ENCODE measurements at regions of chr7 and their contacts with region 1.

Region 1: GRCh38 chr7:130896898-130897514 is 163.0 kb upstream of the KLF14 start:
- DNase-seq: peak in 1 of 2 donors; percentile 76
- ATAC-seq: peak; percentile 7 to 15
- H3K4me3 ChIP-seq: peak overlapping the region in 1 of 4 donors; percentile 5
- H3K27ac ChIP-seq: peak overlapping the region; percentile 91 to 97 (median 94)
- H3K4me1 ChIP-seq: peaks cover 94 to 95% of the 10 kb centered on the region in 2 donors
- H3K27me3 ChIP-seq: no peaks in the 10 kb centered on the region
- CTCF ChIP-seq: peak; percentile 73 to 87 (median 84)
- POLR2A ChIP-seq: no peak

Region 2: DNA sequence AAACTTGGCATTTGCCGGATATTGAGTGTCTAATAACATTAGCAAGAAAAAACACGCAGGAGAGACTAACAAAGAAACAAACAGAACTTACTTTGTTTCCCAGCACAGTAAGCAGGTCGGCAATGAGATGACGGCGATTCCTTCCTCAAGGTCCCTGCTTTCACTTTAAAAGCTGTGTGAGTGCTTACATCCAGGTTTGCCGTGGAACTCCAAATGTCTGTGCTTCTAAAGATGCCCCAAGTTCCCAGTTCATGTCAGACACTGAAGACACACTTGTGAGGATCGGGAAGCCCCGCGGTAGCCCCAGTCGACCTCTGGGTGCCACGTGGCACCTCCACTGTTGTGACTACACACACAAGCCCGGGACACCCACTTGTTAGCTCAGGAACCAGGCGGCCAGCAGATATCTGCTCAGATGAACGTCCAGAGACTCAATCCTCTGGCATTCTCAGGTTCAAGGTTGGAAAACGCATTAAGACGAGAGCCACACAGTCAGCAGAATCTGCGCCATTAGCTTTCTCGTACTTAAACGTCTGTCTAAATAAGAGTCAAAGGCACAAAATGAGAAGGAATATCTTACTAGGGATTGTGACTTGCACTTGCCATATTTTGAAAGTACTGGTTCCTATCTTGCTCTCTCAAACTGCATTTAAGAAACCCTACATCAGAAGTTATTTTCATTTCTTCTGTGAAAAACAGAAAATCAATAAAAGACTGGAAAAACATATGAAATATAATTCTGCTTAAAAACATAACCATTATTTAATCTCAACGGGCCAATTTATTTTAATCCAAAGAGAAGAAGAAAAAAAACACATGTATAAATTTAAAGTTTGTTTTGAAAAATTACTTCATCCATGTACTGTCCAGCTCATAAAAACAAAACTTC is 44.6 kb after region 1 on chr7:
- in situ Hi-C with region 1: no loop called
- intact Hi-C with region 1: loop called (anchors 1 kb)
- DNase-seq: peak; percentile 87 to 88
- ATAC-seq: peak; percentile 47 to 72
- H3K4me3 ChIP-seq: peak overlapping the region; percentile 61 to 81 (median 68)
- H3K27ac ChIP-seq: peak overlapping the region; percentile 91 to 97 (median 94)
- H3K4me1 ChIP-seq: peaks cover 35 to 74% of the 10 kb centered on the region in 2 donors
- H3K27me3 ChIP-seq: no peaks in the 10 kb centered on the region
- CTCF ChIP-seq: no peak
- POLR2A ChIP-seq: peak; percentile 60 to 90

Region 3: GRCh38 chr7:131424219-131424822 is 527.3 kb after region 1 on chr7:
- in situ Hi-C with region 1: loop called in 1 of 4 experiments (anchors 10 kb)
- intact Hi-C with region 1: no loop called
- DNase-seq: no peak
- ATAC-seq: peak; percentile 53 to 62
- H3K4me3 ChIP-seq: no peak overlapping the region
- H3K27ac ChIP-seq: peak overlapping the region; percentile 32 to 58 (median 48)
- H3K4me1 ChIP-seq: peaks cover 25 to 35% of the 10 kb centered on the region in 2 donors
- H3K27me3 ChIP-seq: no peaks in the 10 kb centered on the region
- CTCF ChIP-seq: peak; percentile 31 to 55 (median 43)
- POLR2A ChIP-seq: no peak

Measured in gastrocnemius medialis (tissue), 4 donors.